Vagina (tissue), 2 donors: ENCODE measurements at regions of chr21 and their contacts with region 1.

Region 1: GRCh38 chr21:39388038-39388810 is 39.3 kb upstream of the HMGN1 start:
- DNase-seq: peak in 1 of 2 donors; percentile 88
- H3K4me3 ChIP-seq: peak overlapping the region; percentile 47 to 53
- H3K27ac ChIP-seq: peak overlapping the region; percentile 65
- H3K4me1 ChIP-seq: peaks cover 35% of the 10 kb centered on the region
- H3K27me3 ChIP-seq: no peaks in the 10 kb centered on the region
- CTCF ChIP-seq: peak; percentile 80 to 94 (median 82)
- POLR2A ChIP-seq: no peak

Region 2: GRCh38 chr21:39183237-39184007 is 204.8 kb before region 1 on chr21 and contains the start of gene PSMG1:
- intact Hi-C with region 1: loop called (anchors 10 kb)
- DNase-seq: peak in 1 of 2 donors; percentile 94
- H3K4me3 ChIP-seq: peak within 1 kb of the TSS; percentile 84 to 86
- H3K27ac ChIP-seq: peak within 1 kb of the TSS; percentile 94
- H3K4me1 ChIP-seq: peaks cover 18% of the 10 kb centered on the region
- H3K27me3 ChIP-seq: no peaks in the 10 kb centered on the region
- CTCF ChIP-seq: peak in 1 of 3 experiments; percentile 27
- POLR2A ChIP-seq: peak in 1 of 2 donors; percentile 69
- total RNA-seq, gene PSMG1: 25.3 TPM

Region 3: DNA sequence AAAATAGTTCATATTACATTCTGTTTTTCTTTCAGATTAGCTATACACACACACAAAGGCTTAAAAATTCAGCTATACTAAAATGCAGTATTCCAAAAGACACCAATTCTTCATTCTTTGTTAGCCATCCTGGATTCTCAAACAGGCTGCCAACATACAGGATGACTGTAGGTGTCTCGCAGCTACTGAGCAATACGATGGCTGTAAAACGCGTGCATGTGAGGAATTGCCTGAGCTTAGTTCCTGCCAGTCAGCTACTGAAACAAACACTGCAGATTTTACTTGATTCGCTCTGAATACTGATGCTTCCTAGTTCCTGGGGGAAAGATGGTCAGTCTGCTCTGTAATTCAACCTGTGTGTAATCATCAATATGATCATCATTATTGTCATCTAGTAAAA is 14.6 kb before region 1 on chr21:
- intact Hi-C with region 1: no loop called
- DNase-seq: no peak
- H3K4me3 ChIP-seq: no peak overlapping the region
- H3K27ac ChIP-seq: no peak overlapping the region
- H3K4me1 ChIP-seq: no peaks in the 10 kb centered on the region
- H3K27me3 ChIP-seq: no peaks in the 10 kb centered on the region
- CTCF ChIP-seq: no peak
- POLR2A ChIP-seq: no peak

Region 4: GRCh38 chr21:39633770-39634181 is 245.6 kb after region 1 on chr21:
- intact Hi-C with region 1: no loop called
- DNase-seq: no peak
- H3K4me3 ChIP-seq: no peak overlapping the region
- H3K27ac ChIP-seq: peak overlapping the region; percentile 48
- H3K4me1 ChIP-seq: no peaks in the 10 kb centered on the region
- H3K27me3 ChIP-seq: no peaks in the 10 kb centered on the region
- CTCF ChIP-seq: no peak
- POLR2A ChIP-seq: no peak